Activated naive CD4-positive, alpha-beta T cell treated with anti-CD3 and anti-CD28 coated beads for 36 hours (primary cell): ENCODE measurements at regions of chr7 and their contacts with region 1.

Region 1: GRCh38 chr7:123367484-123368122 is 166.8 kb downstream of the IQUB start:
- DNase-seq: peak; percentile 9
- H3K4me3 Mint-ChIP-seq: no peak overlapping the region
- H3K27ac Mint-ChIP-seq: no peak overlapping the region
- H3K4me1 Mint-ChIP-seq: no peaks in the 10 kb centered on the region
- H3K27me3 Mint-ChIP-seq: no peaks in the 10 kb centered on the region

Region 2: DNA sequence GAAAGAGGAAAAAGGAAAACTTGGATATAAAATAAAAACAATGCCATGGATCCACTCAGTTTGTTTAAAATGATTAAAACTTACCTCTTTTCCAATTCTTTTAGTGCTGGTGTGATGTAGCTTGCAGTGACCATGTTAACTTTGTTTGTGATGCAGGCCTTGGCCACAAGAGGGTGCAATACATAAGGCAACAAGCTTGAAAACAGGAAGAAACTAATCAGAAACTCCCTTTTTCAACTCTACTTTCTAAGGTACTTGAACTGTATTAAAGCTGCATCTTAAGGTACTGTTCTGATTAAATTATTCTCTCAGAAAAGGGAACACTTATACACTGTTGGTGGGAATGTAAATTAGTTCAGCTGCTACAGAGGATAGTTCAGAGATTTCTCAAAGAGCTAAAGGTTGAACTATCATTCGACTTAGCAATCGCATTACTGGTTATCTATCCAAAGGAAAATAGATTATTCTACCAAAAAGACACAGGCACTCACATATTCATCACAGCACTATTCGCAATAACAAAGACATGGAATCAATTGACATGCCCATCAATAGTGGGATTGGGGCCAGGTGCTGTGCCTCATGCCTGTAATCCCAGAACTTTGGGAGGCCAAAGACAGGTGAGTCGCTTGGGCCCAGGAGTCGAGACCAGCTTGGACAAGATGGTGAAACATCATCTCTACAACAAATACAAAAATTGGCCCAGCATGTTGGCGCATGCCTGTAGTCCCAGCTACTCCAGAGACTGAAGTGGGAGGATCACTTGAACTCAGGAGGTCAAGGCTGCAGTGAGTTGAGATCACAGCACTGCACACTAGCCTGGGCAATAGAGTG is 1274.4 kb before region 1 on chr7:
- CTCF ChIA-PET with region 1: no interaction called
- intact Hi-C with region 1: loop called (anchors 10 kb)
- DNase-seq: peak; percentile 74
- H3K4me3 Mint-ChIP-seq: no peak overlapping the region
- H3K27ac Mint-ChIP-seq: no peak overlapping the region
- H3K4me1 Mint-ChIP-seq: no peaks in the 10 kb centered on the region
- H3K27me3 Mint-ChIP-seq: no peaks in the 10 kb centered on the region